ENCODE measurements at regions of chr13 and their contacts with region 1.

Region 1: GRCh38 chr13:20945952-20946383 is 43.4 kb upstream of the XPO4 start:
- DNase-seq: peak in 1 of 7 donors; percentile 19
- H3K4me3 ChIP-seq: peak overlapping the region in 1 of 4 donors; percentile 10
- H3K27ac ChIP-seq: no peak overlapping the region
- H3K4me1 ChIP-seq: peaks cover 0 to 4% of the 10 kb centered on the region in 2 donors
- H3K27me3 ChIP-seq: no peaks in the 10 kb centered on the region
- CTCF ChIP-seq: no peak
- POLR2A ChIP-seq: no peak

Region 2: DNA sequence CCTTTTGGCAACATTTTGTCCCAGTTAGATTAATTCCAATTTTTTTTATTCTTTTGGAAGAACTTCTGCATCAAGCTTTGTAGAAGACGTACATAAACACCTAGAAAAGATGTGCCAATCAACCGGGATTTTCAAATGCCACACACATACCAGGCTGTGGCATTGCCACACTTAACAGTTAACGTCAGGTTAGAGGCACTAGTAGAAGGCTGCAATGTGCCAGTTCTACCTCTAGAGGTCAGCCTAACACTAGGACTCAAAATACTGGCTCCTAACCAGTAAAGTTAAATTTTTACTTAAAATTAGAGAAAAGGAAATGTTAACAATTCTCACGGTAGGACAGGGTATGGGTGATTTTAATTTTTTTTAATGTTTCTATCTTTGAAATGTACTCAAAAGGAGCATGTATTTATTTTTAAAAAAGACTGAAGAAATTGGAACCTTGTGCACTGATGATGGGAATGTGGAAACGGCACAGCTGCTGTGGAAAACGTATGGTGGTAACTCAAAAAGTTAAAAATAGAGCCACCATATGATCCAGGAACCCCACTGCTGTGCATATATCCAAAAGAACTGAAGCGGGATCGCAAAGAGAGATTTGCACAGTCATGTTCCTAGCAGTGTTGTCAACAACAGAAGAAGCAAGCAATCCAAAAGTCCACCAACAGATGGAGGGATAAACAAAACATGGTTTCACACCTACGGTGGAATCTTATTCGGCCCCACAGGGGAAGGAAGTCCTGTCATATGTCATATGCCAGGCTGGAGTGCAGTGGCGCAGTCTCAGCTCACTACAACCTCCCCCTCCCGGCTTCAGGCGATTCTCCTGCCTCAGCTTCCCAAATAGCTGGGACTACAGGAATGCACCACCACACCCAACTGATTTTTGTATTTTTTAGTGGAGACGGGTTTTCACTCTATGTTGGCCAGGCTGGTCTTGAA is 450.6 kb before region 1 on chr13:
- intact Hi-C with region 1: no loop called
- DNase-seq: peak; percentile 47 to 88 (median 67)
- H3K4me3 ChIP-seq: peak overlapping the region in 1 of 4 donors; percentile 21
- H3K27ac ChIP-seq: no peak overlapping the region
- H3K4me1 ChIP-seq: peaks cover 0 to 3% of the 10 kb centered on the region in 2 donors
- H3K27me3 ChIP-seq: no peaks in the 10 kb centered on the region
- CTCF ChIP-seq: peak; percentile 88 to 95 (median 92)
- POLR2A ChIP-seq: no peak

Region 3: GRCh38 chr13:21075011-21075898 is 129.3 kb after region 1 on chr13:
- intact Hi-C with region 1: loop called in 1 of 2 experiments (anchors 10 kb)
- DNase-seq: peak in 1 of 7 donors; percentile 34
- H3K4me3 ChIP-seq: peak overlapping the region in 2 of 4 donors; percentile 38 to 60
- H3K27ac ChIP-seq: peak overlapping the region in 2 of 5 donors; percentile 49 to 77
- H3K4me1 ChIP-seq: peaks cover 0 to 4% of the 10 kb centered on the region in 2 donors
- H3K27me3 ChIP-seq: no peaks in the 10 kb centered on the region
- CTCF ChIP-seq: no peak
- POLR2A ChIP-seq: no peak

Region 4: GRCh38 chr13:21137696-21138095 is 191.7 kb after region 1 on chr13:
- intact Hi-C with region 1: loop called (anchors 5 to 10 kb)
- DNase-seq: peak in 2 of 7 donors; percentile 24 to 32
- H3K4me3 ChIP-seq: no peak overlapping the region
- H3K27ac ChIP-seq: no peak overlapping the region
- H3K4me1 ChIP-seq: peaks cover 13 to 22% of the 10 kb centered on the region in 2 donors
- H3K27me3 ChIP-seq: peaks cover 7% of the 10 kb centered on the region
- CTCF ChIP-seq: no peak
- POLR2A ChIP-seq: no peak

Region 5: GRCh38 chr13:21164631-21165030 is 218.7 kb after region 1 on chr13:
- intact Hi-C with region 1: no loop called
- DNase-seq: no peak
- H3K4me3 ChIP-seq: no peak overlapping the region
- H3K27ac ChIP-seq: no peak overlapping the region
- H3K4me1 ChIP-seq: no peaks in the 10 kb centered on the region
- H3K27me3 ChIP-seq: no peaks in the 10 kb centered on the region
- CTCF ChIP-seq: no peak
- POLR2A ChIP-seq: no peak